Activated naive CD4-positive, alpha-beta T cell treated with anti-CD3 and anti-CD28 coated beads for 36 hours (primary cell): ENCODE measurements at regions of chr5 and their contacts with region 1.

Region 1: GRCh38 chr5:80960531-80961375 is 590 bp downstream of the RASGRF2 start:
- DNase-seq: peak; percentile 49
- H3K4me3 Mint-ChIP-seq: peak overlapping the region; percentile 80
- H3K27ac Mint-ChIP-seq: peak overlapping the region; percentile 61
- H3K4me1 Mint-ChIP-seq: peaks cover 59% of the 10 kb centered on the region
- H3K27me3 Mint-ChIP-seq: no peaks in the 10 kb centered on the region

Region 2: GRCh38 chr5:80487829-80488721 is 472.7 kb before region 1 on chr5 and contains the start of gene FAM151B:
- CTCF ChIA-PET with region 1: no interaction called
- intact Hi-C with region 1: loop called (anchors 2 kb)
- DNase-seq: peak; percentile 85
- H3K4me3 Mint-ChIP-seq: peak within 1 kb of the TSS; percentile 79
- H3K27ac Mint-ChIP-seq: no peak within 1 kb of the TSS
- H3K4me1 Mint-ChIP-seq: peaks cover 13% of the 10 kb centered on the region
- H3K27me3 Mint-ChIP-seq: no peaks in the 10 kb centered on the region
- total RNA-seq, gene FAM151B: 0.15 to 0.36 TPM

Region 3: GRCh38 chr5:80711938-80712337 is 248.8 kb before region 1 on chr5:
- CTCF ChIA-PET with region 1: no interaction called
- intact Hi-C with region 1: loop called (anchors 5 kb)
- DNase-seq: peak; percentile 33
- H3K4me3 Mint-ChIP-seq: no peak overlapping the region
- H3K27ac Mint-ChIP-seq: no peak overlapping the region
- H3K4me1 Mint-ChIP-seq: peaks cover 6% of the 10 kb centered on the region
- H3K27me3 Mint-ChIP-seq: no peaks in the 10 kb centered on the region

Region 4: DNA sequence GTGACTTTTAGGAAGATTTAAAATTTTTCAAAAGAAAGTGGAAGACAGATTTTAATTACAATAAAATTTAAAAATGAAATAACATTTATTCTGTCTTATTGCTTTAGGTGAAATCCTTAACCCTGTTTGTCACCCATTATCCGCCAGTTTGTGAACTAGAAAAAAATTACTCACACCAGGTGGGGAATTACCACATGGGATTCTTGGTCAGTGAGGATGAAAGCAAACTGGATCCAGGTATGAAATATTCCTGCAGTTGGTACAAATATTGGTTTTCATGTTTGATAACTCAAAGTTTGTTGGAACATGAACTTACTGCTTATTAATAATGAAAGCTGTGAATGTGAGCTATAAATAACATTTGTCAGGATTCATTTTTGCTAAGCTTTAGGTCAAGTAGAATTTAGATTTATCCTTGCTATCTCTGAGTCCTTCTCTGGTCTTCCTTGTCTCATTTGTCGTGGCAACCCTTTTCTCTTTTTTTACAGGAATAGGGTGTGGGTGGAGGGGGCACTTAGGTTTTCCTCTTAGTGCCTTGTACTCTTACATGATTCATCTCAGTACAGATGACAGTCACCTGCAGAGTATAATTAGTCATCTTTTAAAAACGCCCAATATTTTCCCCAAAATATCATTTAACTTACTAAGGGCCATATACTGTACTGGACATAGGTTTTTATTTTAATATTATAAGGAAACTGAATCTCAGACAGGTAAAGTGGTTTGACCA is 95.9 kb before region 1 on chr5:
- CTCF ChIA-PET with region 1: no interaction called
- intact Hi-C with region 1: loop called (anchors 2 kb)
- DNase-seq: peak; percentile 30
- H3K4me3 Mint-ChIP-seq: no peak overlapping the region
- H3K27ac Mint-ChIP-seq: peak overlapping the region; percentile 21
- H3K4me1 Mint-ChIP-seq: peaks cover 47% of the 10 kb centered on the region
- H3K27me3 Mint-ChIP-seq: no peaks in the 10 kb centered on the region

Region 5: GRCh38 chr5:81017320-81017719 is 56.6 kb after region 1 on chr5:
- CTCF ChIA-PET with region 1: no interaction called
- intact Hi-C with region 1: loop called (anchors 1 kb)
- DNase-seq: peak; percentile 41
- H3K4me3 Mint-ChIP-seq: no peak overlapping the region
- H3K27ac Mint-ChIP-seq: peak overlapping the region; percentile 84
- H3K4me1 Mint-ChIP-seq: peaks cover 76% of the 10 kb centered on the region
- H3K27me3 Mint-ChIP-seq: no peaks in the 10 kb centered on the region

Region 6: DNA sequence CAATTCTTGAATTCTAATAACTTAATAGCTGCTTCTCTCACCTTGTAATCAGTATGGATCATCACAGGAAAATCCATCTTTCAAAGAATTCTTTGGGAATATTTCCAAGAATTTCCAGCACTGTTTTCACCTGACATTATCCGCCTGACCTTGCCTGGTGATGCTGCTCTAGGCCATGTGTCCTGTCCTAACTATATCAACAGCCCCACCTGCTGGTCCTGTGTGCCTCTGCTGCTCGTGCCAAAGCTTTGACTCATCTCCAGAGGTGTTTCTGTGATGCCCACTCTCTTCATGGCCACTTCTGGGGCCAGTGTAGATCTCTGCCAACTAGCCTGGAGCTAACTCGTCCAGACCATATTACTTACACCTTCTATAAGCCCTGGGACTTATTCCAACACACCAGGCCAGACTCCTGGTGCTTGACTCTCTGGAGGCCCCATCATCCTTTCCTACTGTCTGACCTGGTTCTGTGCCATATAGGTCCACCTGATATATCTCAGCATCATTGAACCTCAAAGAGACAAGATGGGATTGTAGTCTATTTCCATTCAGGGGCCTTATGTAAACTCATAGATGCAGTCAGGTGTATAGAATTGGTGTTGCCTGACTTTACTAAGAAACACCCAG is 204.9 kb after region 1 on chr5:
- CTCF ChIA-PET with region 1: no interaction called
- intact Hi-C with region 1: loop called (anchors 1 kb)
- DNase-seq: peak; percentile 88
- H3K4me3 Mint-ChIP-seq: no peak overlapping the region
- H3K27ac Mint-ChIP-seq: no peak overlapping the region
- H3K4me1 Mint-ChIP-seq: peaks cover 3% of the 10 kb centered on the region
- H3K27me3 Mint-ChIP-seq: no peaks in the 10 kb centered on the region